ENCODE measurements at regions of chr2 and their contacts with region 1.

Region 1: DNA sequence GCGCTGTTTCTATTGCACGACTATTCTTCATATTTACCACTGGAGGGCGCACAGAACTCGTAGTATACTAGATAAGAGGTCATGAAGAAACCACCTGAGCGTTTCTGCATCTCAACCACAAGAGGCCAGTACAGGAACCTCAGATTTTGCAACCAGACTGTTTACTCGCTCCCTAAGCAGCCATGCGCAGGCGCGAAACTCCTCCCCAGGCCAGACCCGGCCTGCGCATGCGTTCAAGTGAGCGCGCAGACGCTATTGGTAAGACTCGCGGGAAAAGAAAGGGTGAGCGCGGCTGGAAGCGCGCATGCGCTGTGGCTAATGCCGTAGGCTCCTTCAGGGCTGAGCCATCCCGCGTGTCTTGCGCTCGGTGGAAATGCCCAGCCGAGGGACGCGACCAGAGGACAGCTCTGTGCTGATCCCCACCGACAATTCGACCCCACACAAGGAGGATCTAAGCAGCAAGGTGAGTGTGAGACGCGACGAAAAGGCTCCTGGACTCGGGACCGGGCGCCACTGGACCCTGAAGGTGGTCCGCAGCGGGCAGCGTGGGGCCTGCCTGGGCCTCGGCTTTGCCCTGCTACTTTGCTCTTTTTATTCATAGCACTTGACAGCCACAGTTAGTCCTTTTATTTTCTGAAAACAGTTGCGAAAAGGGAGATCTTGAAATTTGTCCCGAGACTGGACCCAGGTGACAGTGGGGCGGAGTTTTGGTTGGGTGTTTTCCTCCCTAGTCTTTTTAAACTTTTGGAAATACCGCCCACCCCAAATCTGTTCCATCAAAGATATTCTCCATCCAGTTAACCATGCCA is at the start of gene ASNSD1:
- DNase-seq: peak; percentile 100
- H3K27ac ChIP-seq: peak within 1 kb of the TSS; percentile 73
- CTCF ChIP-seq: peak; percentile 97

Region 2: DNA sequence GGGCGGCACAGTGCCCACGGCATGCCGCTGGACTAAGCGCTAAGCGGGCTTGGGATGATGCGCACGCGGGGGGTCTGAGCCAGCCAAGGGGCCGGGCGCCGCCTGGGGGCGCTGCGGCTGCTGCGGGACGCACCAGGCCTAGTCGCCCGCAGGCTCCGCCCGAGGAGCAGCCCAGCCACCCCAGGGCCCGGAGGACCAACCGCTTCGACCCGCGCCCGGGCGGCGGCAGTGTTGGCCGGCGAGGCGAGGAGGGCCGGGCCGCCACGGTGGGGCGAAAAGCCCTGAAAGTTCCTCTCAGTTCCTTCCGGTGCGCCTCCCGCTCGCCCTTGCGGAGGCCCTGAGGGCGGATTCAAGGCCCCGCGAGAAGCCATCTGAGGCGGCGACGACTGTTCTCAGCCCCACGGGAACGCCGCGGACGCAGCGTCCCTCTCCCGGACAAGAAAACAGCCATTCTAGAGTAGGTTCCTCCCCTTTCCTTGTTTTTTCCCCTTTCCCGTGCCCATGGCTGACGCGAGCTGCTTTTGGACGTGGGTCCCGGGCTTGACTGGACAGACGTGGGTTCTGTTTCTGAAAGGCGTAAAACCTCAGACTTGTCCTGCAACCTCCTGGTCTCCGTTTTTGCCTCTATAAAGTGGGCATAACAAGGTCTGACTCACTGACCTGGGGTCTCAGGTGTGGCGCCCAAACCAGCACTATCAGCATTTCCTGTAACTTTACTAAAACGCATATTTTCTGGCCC is 13.2 kb after region 1 on chr2 and contains the start of gene ANKAR:
- CTCF ChIA-PET with region 1: interaction called, 12 read pairs
- POLR2A ChIA-PET with region 1: no interaction called
- DNase-seq: peak; percentile 69
- H3K27ac ChIP-seq: peak within 1 kb of the TSS; percentile 87
- CTCF ChIP-seq: peak; percentile 91

Region 3: DNA sequence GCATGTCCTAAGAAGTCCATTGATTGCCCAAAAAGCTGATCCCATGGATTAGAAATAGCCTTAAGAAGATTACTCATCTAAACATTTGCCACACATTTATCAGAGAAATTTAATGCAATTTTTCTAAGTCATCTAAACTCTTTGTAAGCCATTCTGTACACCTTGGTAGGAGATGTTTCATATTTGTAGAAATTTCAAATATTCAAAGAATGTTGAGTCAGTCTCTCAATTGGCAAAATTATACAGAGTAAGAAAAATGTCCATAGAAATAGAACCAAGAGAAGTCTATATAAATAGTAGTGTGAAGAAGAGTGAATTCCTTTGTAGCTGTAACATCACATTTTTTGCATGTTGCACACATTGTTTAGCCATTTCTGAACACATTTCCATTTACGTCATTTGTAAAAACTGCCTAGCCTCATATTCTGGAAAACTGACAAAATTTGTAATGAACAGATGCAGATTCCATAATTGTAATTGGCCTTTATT is 272.6 kb after region 1 on chr2:
- CTCF ChIA-PET with region 1: no interaction called
- POLR2A ChIA-PET with region 1: no interaction called
- DNase-seq: peak; percentile 47
- H3K27ac ChIP-seq: no peak overlapping the region
- CTCF ChIP-seq: no peak

Measured in RWPE1 (cell line).